Activated CD4-positive, alpha-beta T cell treated with anti-CD3 and anti-CD28 coated beads, Interleukin-2, amount 10 ng/mL, durations not matched to agents 24 days and 14 days (primary cell): ENCODE measurements at regions of chr7 and their contacts with region 1.

Region 1: DNA sequence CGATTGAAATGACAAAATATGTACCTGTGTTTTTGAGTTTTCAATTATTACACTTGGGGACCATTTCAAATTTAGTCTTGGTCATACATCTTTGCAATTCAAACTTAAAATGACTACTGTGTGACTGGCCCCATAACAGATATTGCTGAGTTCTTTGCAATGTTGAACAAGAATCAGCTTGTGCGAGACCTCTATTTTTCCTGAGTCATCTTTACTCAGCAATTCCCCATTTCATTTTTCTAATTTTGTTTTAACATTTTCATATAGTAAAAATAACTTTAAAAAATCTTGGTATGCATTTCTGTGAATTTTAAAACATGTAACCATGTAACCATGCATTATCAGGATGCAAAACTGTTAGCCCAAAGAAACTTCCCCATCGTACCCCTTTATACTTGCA is 678.1 kb downstream of the ANKRD7 start:
- DNase-seq: no peak
- H3K4me3 Mint-ChIP-seq: no peak overlapping the region
- H3K27ac Mint-ChIP-seq: no peak overlapping the region
- H3K4me1 Mint-ChIP-seq: no peaks in the 10 kb centered on the region
- H3K27me3 Mint-ChIP-seq: no peaks in the 10 kb centered on the region

Region 2: DNA sequence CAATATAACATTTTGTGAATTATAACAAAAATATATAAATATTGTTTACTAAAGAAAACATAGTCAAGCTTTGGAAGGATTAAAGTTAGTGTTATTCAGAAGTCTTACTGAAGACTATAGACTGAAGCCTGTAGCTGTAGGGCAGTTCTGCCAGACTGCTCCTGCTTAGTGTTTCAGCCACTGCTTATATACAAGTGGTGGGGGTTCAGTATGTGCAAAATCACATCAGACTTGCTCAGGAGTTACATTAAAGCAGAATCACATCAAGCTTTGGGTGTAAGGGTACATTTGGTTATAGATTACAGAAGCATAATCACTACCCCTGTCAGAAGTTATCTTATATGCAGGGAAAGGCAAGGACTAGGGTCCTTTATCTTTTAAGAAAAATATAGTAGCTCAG is 24.3 kb before region 1 on chr7:
- intact Hi-C with region 1: no loop called
- DNase-seq: no peak
- H3K4me3 Mint-ChIP-seq: no peak overlapping the region
- H3K27ac Mint-ChIP-seq: no peak overlapping the region
- H3K4me1 Mint-ChIP-seq: no peaks in the 10 kb centered on the region
- H3K27me3 Mint-ChIP-seq: no peaks in the 10 kb centered on the region

Region 3: GRCh38 chr7:118938845-118939244 is 36.2 kb after region 1 on chr7:
- intact Hi-C with region 1: loop called (anchors 2 kb)
- DNase-seq: no peak
- H3K4me3 Mint-ChIP-seq: no peak overlapping the region
- H3K27ac Mint-ChIP-seq: no peak overlapping the region
- H3K4me1 Mint-ChIP-seq: no peaks in the 10 kb centered on the region
- H3K27me3 Mint-ChIP-seq: no peaks in the 10 kb centered on the region